Activated CD4-positive, alpha-beta memory T cell treated with anti-CD3 and anti-CD28 coated beads for 36 hours (primary cell): ENCODE measurements at regions of chr6 and their contacts with region 1.

Region 1: DNA sequence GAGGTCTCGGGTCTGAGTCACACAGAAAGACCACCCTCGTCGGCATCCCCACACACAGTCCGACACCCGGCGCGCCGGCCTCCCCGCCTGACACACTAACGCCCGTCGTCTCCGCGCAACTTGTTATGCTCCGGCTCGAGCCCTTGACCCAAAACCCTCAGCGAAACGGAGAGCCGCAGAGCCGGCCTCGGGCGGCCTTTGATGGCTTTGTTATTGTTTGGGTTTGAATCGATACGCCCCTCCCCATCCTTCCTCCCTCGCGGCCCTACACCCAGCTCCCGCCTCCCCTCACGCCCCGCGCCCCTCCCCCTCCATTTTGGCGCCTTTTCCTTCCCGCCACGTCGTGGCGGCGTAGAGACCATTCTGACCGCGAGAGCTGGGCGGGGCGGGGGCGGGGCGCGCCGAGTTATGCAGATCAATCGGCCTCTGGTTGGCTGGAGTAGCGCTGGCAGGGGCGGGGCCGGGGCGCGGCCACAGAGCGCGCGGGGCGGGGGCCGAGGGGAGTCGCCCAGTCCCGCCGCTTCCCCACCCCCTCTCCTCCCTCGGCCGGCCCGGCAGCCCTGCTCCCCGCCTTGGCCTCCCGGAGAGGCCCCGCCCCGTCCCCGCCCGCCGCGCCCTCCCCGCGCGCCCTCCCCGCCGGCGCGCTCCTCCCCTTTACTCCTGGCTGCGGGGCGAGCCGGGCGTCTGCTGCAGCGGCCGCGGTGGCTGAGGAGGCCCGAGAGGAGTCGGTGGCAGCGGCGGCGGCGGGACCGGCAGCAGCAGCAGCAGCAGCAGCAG is at the start of gene PIM1:
- DNase-seq: peak; percentile 100
- H3K4me3 Mint-ChIP-seq: peak within 1 kb of the TSS; percentile 90
- H3K27ac Mint-ChIP-seq: peak within 1 kb of the TSS; percentile 97
- H3K4me1 Mint-ChIP-seq: peaks cover 32% of the 10 kb centered on the region
- H3K27me3 Mint-ChIP-seq: no peaks in the 10 kb centered on the region
- total RNA-seq, gene PIM1: 204 TPM

Region 2: GRCh38 chr6:36594029-36594815 is 575.5 kb before region 1 on chr6 and contains the start of gene SRSF3:
- CTCF ChIA-PET with region 1: no interaction called
- POLR2A ChIA-PET with region 1: interaction called, 3 read pairs
- intact Hi-C with region 1: loop called (anchors 10 kb)
- DNase-seq: peak; percentile 97
- H3K4me3 Mint-ChIP-seq: peak within 1 kb of the TSS; percentile 96
- H3K27ac Mint-ChIP-seq: peak within 1 kb of the TSS; percentile 99
- H3K4me1 Mint-ChIP-seq: peaks cover 27% of the 10 kb centered on the region
- H3K27me3 Mint-ChIP-seq: peaks cover 2% of the 10 kb centered on the region
- total RNA-seq, gene SRSF3: 390 to 392 TPM

Region 3: GRCh38 chr6:37051138-37052026 is 118.3 kb before region 1 on chr6:
- CTCF ChIA-PET with region 1: interaction called, 302 read pairs
- POLR2A ChIA-PET with region 1: interaction called, 166 read pairs
- intact Hi-C with region 1: loop called (anchors 1 kb)
- DNase-seq: peak; percentile 95
- H3K4me3 Mint-ChIP-seq: peak overlapping the region; percentile 53
- H3K27ac Mint-ChIP-seq: peak overlapping the region; percentile 98
- H3K4me1 Mint-ChIP-seq: peaks cover 55% of the 10 kb centered on the region
- H3K27me3 Mint-ChIP-seq: no peaks in the 10 kb centered on the region

Region 4: GRCh38 chr6:37137201-37138090 is 32.2 kb before region 1 on chr6:
- CTCF ChIA-PET with region 1: interaction called, 32 read pairs
- POLR2A ChIA-PET with region 1: interaction called, 15 read pairs
- intact Hi-C with region 1: loop called (anchors 1 kb)
- DNase-seq: peak; percentile 81
- H3K4me3 Mint-ChIP-seq: peak overlapping the region; percentile 66
- H3K27ac Mint-ChIP-seq: peak overlapping the region; percentile 84
- H3K4me1 Mint-ChIP-seq: peaks cover 54% of the 10 kb centered on the region
- H3K27me3 Mint-ChIP-seq: no peaks in the 10 kb centered on the region

Region 5: DNA sequence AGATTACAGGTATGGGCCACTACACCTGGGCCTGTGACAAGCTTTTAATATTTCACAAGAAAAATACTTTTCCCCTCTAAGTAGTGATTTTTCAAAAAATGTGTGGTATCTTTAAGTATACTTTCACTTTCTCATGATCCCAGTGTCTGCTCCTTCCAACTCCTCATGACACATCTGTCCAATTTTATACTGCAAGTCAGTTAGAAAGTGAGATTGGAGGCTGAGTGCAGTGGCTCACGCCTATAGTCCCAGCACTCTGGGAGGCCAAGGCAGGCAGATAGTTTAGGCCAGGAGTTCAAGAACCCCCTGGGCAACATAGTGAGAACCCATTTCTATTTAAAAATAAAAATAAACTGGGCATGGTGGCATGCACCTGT is 20.5 kb after region 1 on chr6:
- CTCF ChIA-PET with region 1: interaction called, 15 read pairs
- POLR2A ChIA-PET with region 1: interaction called, 7 read pairs
- intact Hi-C with region 1: loop called (anchors 1 kb)
- DNase-seq: peak; percentile 58
- H3K4me3 Mint-ChIP-seq: no peak overlapping the region
- H3K27ac Mint-ChIP-seq: peak overlapping the region; percentile 72
- H3K4me1 Mint-ChIP-seq: peaks cover 67% of the 10 kb centered on the region
- H3K27me3 Mint-ChIP-seq: no peaks in the 10 kb centered on the region

Region 6: GRCh38 chr6:37257634-37258404 is 88.1 kb after region 1 on chr6 and contains the starts of genes TBC1D22B and TMEM217:
- CTCF ChIA-PET with region 1: interaction called, 3 read pairs
- POLR2A ChIA-PET with region 1: interaction called, 4 read pairs
- intact Hi-C with region 1: loop called (anchors 1 kb)
- DNase-seq: peak; percentile 98
- H3K4me3 Mint-ChIP-seq: peak within 1 kb of the TSS; percentile 86
- H3K27ac Mint-ChIP-seq: peak within 1 kb of the TSS; percentile 87
- H3K4me1 Mint-ChIP-seq: peaks cover 46% of the 10 kb centered on the region
- H3K27me3 Mint-ChIP-seq: no peaks in the 10 kb centered on the region
- total RNA-seq, gene TBC1D22B: 14.4 to 15.7 TPM
- total RNA-seq, gene TMEM217: 2.2 to 3.3 TPM

Region 7: GRCh38 chr6:37332894-37333293 is 163.2 kb after region 1 on chr6:
- CTCF ChIA-PET with region 1: no interaction called
- POLR2A ChIA-PET with region 1: no interaction called
- intact Hi-C with region 1: no loop called
- DNase-seq: no peak
- H3K4me3 Mint-ChIP-seq: no peak overlapping the region
- H3K27ac Mint-ChIP-seq: peak overlapping the region; percentile 4
- H3K4me1 Mint-ChIP-seq: peaks cover 9% of the 10 kb centered on the region
- H3K27me3 Mint-ChIP-seq: no peaks in the 10 kb centered on the region